Ascending aorta (tissue), 2 donors: ENCODE measurements at regions of chr15 and their contacts with region 1.

Region 1: DNA sequence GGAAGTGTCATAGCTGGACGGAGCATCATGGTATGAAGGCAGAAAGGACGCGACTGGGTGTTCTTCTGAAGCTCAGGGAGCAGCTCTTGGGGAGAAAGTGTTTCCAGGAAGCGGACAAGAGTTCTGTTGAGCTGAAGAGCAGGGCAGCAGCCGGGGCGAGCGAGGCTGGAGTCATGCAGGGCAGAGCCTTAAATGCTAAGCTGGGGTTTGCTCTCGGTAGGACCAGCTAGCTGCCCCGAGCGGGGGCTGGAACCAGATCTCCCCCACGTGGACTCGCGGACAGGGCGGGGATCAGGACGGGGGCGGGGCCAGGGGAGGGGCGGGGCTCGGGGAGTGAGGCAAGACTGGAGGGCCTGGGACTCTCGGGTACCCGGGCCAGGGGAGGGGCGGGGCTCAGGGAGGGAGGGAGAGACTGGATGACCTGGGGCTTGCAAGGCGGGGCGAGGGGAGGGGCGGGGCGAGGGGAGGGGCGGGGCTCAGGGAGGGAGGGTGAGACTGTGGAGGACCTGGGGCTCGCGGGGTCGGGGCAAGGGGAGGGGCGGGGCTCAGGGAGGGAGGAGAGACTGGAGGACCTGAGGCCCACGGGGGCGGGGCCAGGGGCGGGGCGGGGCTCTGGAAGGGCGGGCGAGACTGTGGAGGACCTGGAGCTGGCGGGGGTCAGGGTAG is 486 bp upstream of the FAH start:
- DNase-seq: peak; percentile 97 to 98
- H3K4me3 ChIP-seq: peak overlapping the region; percentile 71 to 84
- H3K27ac ChIP-seq: peak overlapping the region; percentile 83 to 85
- H3K4me1 ChIP-seq: peaks cover 4 to 15% of the 10 kb centered on the region in 2 donors
- H3K27me3 ChIP-seq: no peaks in the 10 kb centered on the region
- CTCF ChIP-seq: no peak

Region 2: DNA sequence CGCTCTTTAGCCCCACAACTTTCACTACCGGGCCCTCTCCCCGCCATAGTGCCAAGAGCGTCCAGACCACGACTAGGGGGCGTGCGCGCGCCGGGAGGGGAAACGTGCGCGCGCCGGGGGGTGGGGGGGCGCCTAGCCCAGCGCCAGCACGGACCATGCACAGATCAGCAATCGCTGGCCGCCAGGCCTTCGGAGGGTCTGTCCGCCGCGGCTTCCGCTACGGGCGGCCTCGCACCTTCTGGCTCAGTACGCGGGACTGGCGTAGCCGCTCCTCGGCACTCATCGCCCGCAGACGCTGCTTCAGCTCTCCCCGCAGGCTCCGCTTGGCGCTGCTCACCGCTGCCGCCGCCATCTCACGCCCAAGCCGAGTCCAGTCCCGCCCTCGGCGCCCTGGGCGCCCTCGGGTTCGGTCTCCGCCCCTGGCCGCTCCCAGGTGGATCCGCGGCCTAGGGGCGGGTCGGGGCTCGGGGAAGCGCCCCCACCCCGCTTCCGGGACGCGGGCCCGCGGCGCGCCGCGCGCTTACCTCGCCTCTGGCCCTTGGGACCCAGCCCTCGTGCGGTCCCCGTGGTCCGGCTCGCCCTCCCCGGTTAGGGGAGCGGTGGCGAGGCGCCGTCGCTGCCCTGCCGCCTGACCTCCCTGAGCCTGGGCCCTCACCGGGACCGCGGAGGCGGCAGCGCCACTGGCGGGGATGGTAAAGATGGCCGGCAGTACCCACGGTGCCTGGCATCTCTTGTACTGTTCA is 255.5 kb before region 1 on chr15 and contains the start of gene MTHFS:
- intact Hi-C with region 1: loop called (anchors 5 kb)
- DNase-seq: peak; percentile 22 to 78
- H3K4me3 ChIP-seq: peak within 1 kb of the TSS; percentile 74 to 83
- H3K27ac ChIP-seq: peak within 1 kb of the TSS; percentile 96 to 97
- H3K4me1 ChIP-seq: no peaks in the 10 kb centered on the region
- H3K27me3 ChIP-seq: no peaks in the 10 kb centered on the region
- CTCF ChIP-seq: peak; percentile 29 to 69 (median 66)
- total RNA-seq, gene MTHFS: 0.75 TPM

Region 3: GRCh38 chr15:79923515-79924395 is 228.6 kb before region 1 on chr15:
- intact Hi-C with region 1: loop called (anchors 2 kb)
- DNase-seq: peak; percentile 82 to 96
- H3K4me3 ChIP-seq: peak overlapping the region; percentile 79 to 86
- H3K27ac ChIP-seq: peak overlapping the region; percentile 95 to 96
- H3K4me1 ChIP-seq: peaks cover 5 to 6% of the 10 kb centered on the region in 2 donors
- H3K27me3 ChIP-seq: no peaks in the 10 kb centered on the region
- CTCF ChIP-seq: no peak

Region 4: DNA sequence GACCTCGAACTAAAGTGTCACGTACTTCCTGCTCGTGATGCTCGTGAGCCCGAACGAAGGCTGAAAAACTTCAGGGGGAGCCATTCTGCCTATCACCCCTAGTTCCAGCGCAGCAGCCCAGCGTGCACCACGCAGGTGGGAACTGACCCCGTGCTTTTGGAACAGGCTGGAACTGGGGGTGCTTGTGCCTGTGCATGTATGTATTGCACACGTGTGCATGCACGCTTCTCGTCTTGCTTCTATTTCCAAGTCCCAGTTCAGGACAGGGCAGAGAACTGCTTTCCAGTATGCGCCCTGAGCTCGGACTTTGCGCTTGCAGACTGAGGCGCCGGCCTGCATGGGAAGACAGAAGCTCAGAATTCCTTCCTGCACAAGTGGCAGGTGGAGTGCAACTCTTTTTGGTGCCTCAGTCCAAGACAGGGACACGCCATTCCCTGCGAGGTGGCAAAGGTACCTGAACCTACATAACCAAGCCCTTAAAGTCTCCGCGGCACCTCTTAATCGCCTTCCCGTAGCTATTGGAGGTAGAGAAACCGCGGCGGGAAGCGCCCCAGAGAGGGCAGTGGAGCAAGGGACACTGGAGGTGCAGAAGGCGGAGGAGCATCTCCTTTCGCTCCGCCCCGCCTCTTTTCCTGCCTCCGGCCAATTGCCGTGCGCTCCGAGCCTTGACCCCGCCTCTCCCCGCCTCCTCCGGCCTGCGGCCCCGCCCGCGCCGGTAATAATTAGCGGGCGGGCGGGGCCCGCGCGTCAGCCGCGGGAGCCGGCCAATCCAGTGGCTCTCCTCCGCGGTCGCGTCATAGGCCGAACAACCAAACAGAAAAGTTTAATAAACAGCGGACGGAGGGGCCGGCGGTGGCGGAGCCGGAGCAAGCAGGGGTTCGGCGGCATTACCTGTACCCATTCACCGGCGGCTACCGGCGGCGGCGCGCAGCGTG is 93.2 kb before region 1 on chr15 and contains the start of gene ZFAND6:
- intact Hi-C with region 1: loop called (anchors 1 kb)
- DNase-seq: peak; percentile 78 to 97
- H3K4me3 ChIP-seq: peak within 1 kb of the TSS; percentile 87 to 96
- H3K27ac ChIP-seq: peak within 1 kb of the TSS; percentile 77 to 94
- H3K4me1 ChIP-seq: peaks cover 0 to 22% of the 10 kb centered on the region in 2 donors
- H3K27me3 ChIP-seq: no peaks in the 10 kb centered on the region
- CTCF ChIP-seq: peak in 1 of 3 experiments; percentile 6
- total RNA-seq, gene ZFAND6: 49.6 TPM

Region 5: DNA sequence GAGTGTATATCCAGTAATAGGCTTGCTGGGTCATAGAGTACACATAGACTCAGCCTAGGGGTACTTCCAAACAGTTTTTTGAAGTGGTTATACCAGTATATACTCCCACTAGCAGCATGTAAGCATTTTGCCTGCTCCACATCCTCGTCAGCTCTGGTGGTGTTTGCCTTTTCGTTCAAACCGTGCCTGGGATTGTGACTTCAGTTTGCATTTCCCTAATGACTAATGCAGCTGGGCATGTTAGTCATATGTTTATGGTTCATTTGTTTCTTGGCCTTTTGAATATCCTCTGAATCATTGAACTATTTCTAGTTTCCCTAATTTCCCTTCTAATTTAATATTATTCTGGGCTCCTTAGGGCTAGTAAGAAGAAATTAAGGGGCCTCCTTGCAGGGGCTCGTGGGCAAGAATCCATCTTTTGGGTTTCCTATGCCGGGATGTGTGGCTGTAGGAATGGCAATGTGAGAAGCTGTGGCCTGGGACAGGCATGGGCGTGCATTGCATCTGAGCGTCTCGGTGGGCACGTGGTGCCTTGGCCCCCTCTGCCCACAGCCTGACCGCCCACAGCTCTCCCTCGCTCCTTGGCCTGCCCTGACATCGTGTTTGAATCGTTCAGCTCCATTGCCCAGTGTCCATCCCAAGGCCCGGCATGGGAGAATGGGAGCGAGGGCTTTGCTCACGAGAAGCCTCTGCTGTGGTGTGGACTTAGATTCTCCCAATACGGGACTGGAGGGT is 26.9 kb after region 1 on chr15:
- intact Hi-C with region 1: loop called (anchors 1 kb)
- DNase-seq: peak in 1 of 2 donors; percentile 72
- H3K4me3 ChIP-seq: peak overlapping the region; percentile 20 to 24
- H3K27ac ChIP-seq: peak overlapping the region; percentile 78 to 93
- H3K4me1 ChIP-seq: peaks cover 17 to 36% of the 10 kb centered on the region in 2 donors
- H3K27me3 ChIP-seq: no peaks in the 10 kb centered on the region
- CTCF ChIP-seq: no peak

Region 6: GRCh38 chr15:81000624-81001151 is 848.4 kb after region 1 on chr15 and contains the start of gene TLNRD1:
- intact Hi-C with region 1: loop called (anchors 10 kb)
- DNase-seq: peak; percentile 65 to 94
- H3K4me3 ChIP-seq: peak within 1 kb of the TSS; percentile 91 to 92
- H3K27ac ChIP-seq: peak within 1 kb of the TSS; percentile 93 to 99
- H3K4me1 ChIP-seq: peaks cover 7 to 22% of the 10 kb centered on the region in 2 donors
- H3K27me3 ChIP-seq: no peaks in the 10 kb centered on the region
- CTCF ChIP-seq: no peak
- total RNA-seq, gene TLNRD1: 59.3 TPM

Region 7: GRCh38 chr15:81071120-81071519 is 918.8 kb after region 1 on chr15:
- intact Hi-C with region 1: no loop called
- DNase-seq: no peak
- H3K4me3 ChIP-seq: no peak overlapping the region
- H3K27ac ChIP-seq: no peak overlapping the region
- H3K4me1 ChIP-seq: no peaks in the 10 kb centered on the region
- H3K27me3 ChIP-seq: no peaks in the 10 kb centered on the region
- CTCF ChIP-seq: no peak